GM10248 (cell line): ENCODE measurements at regions of chr6 and their contacts with region 1.

Region 1: DNA sequence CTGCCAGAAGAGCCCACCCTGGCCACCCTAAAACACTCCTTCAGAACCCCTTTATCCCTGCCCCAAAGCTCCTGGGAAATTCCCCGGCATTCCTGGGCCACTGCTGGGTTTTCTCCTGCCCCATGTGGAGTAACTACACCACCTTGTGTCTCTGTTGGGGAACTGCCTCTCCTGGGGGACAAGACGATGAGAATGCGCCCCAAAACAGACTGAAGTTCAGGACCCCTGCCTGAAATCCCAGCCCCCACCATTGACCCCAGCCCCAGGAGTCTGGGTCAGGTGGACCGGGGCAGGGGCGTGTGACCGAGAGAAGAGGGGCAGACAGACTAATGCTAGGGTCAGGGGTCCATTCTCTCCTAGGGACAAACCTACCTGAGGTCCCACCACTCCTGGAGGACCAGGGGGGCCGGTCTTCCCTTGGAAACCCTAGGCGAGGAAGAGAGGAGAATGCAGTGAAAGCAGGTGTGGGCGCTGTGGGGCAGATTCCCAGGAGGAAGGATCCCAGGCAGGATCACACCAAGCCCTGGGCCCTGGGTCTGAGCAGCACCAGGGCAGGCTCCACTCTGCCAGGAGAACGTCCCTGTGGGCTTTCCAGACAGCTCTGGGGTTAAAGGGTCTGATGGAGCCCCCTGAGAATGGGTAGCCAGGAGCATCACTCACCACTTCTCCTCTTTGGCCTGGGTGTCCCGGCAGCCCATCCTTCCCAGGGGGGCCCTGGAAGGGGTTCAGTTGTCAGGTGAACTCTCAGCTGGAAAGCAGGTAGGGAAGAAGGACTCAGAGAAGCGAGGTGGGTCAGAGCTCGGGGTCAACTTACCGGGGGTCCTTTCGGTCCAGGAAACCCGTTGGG is 19.4 kb downstream of the COL11A2 start:
- DNase-seq: peak; percentile 73
- CTCF ChIP-seq: peak; percentile 64

Region 2: GRCh38 chr6:33118525-33119123 is 54.3 kb before region 1 on chr6:
- CTCF ChIA-PET with region 1: interaction called, 19 read pairs
- POLR2A ChIA-PET with region 1: no interaction called
- DNase-seq: peak; percentile 45
- CTCF ChIP-seq: peak; percentile 67

Region 3: GRCh38 chr6:33161354-33162331 is 11.3 kb before region 1 on chr6:
- CTCF ChIA-PET with region 1: interaction called, 12 read pairs
- POLR2A ChIA-PET with region 1: no interaction called
- DNase-seq: peak; percentile 92
- CTCF ChIP-seq: peak; percentile 96

Region 4: GRCh38 chr6:33183071-33183683 is 10.3 kb after region 1 on chr6:
- CTCF ChIA-PET with region 1: interaction called, 16 read pairs
- POLR2A ChIA-PET with region 1: no interaction called
- DNase-seq: no peak
- CTCF ChIP-seq: no peak

Region 5: GRCh38 chr6:33241968-33242367 is 69.1 kb after region 1 on chr6:
- CTCF ChIA-PET with region 1: no interaction called
- POLR2A ChIA-PET with region 1: no interaction called
- DNase-seq: no peak
- CTCF ChIP-seq: no peak